Ovary (tissue), 10 donors: ENCODE measurements at regions of chr2 and their contacts with region 1.

Region 1: DNA sequence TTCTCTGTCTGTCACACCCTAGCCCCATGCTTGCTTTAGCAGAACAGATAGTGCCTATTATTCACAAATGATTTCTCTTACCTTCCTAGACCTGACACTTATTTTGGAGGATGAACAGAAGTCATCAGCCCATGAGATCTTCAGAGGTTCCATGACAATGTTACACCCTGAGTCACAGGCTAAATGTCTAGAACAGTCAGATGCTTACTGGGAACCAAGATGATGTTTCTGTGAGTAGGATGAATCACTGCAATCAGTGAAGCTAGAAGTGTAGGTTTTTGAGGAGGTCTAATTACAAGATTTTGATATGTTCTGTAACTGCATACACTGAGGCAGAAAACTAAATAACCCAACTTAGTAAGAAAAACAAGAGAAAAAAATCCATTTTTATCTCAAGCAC is 123.0 kb upstream of the THUMPD2 start:
- DNase-seq: no peak
- H3K4me3 ChIP-seq: no peak overlapping the region
- H3K27ac ChIP-seq: no peak overlapping the region
- H3K4me1 ChIP-seq: no peaks in the 10 kb centered on the region
- H3K27me3 ChIP-seq: no peaks in the 10 kb centered on the region
- CTCF ChIP-seq: no peak
- EP300 ChIP-seq: no peak
- POLR2A ChIP-seq: no peak

Region 2: DNA sequence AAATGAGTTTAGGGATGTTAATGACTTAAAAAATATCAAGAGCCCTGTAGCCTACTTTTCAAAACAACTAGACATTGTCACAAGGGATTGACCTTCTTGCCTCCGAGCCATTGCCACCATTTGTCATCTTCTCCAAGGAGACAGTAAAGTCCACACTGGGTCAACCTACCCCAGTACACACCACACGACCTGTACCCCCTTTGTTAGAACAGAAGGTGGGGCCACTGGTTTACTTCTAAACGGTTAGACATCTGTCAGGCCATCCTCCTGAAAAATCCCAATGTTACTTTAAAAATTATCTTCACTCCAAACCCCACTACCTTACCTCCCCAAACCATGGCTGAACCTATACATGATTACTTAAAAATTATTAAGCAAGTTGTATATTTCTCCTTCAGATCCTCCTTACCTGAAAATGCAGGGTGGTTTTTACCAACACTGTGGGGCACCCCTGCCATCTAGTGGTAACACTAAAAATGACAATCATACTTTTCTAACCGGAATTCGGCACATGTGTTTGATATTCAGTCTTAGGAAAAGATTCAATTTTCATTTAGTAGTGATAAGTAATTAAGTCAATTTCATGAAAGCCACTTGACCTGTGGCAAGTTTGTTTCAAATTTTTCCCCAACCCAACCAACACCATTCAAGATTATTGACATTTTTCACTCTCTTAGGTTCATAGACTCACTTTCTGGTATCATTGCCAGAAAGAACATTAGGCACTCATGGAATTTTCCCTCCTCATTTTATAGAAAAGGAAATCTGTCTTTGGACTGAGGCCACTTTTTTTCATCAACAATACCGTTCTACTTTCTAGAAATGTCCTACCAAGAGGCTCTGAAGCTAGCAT is 1880.4 kb after region 1 on chr2:
- intact Hi-C with region 1: loop called in 1 of 4 experiments (anchors 10 kb)
- DNase-seq: peak in 2 of 5 donors; percentile 26 to 28
- H3K4me3 ChIP-seq: no peak overlapping the region
- H3K27ac ChIP-seq: no peak overlapping the region
- H3K4me1 ChIP-seq: peaks cover 1% of the 10 kb centered on the region
- H3K27me3 ChIP-seq: no peaks in the 10 kb centered on the region
- CTCF ChIP-seq: peak; percentile 35 to 84 (median 83)
- EP300 ChIP-seq: no peak
- POLR2A ChIP-seq: no peak